Activated naive CD4-positive, alpha-beta T cell treated with anti-CD3 and anti-CD28 coated beads for 36 hours (primary cell): ENCODE measurements at regions of chr2 and their contacts with region 1.

Region 1: GRCh38 chr2:12716282-12717190 is at the start of gene TRIB2:
- DNase-seq: peak; percentile 84
- H3K4me3 Mint-ChIP-seq: peak within 1 kb of the TSS; percentile 96
- H3K27ac Mint-ChIP-seq: peak within 1 kb of the TSS; percentile 76
- H3K4me1 Mint-ChIP-seq: peaks cover 46% of the 10 kb centered on the region
- H3K27me3 Mint-ChIP-seq: peaks cover 1% of the 10 kb centered on the region
- total RNA-seq, gene TRIB2: 3.7 to 4.4 TPM

Region 2: GRCh38 chr2:11863513-11864328 is 852.8 kb before region 1 on chr2:
- CTCF ChIA-PET with region 1: interaction called, 4 read pairs
- intact Hi-C with region 1: loop called (anchors 1 kb)
- DNase-seq: peak; percentile 74
- H3K4me3 Mint-ChIP-seq: no peak overlapping the region
- H3K27ac Mint-ChIP-seq: no peak overlapping the region
- H3K4me1 Mint-ChIP-seq: peaks cover 22% of the 10 kb centered on the region
- H3K27me3 Mint-ChIP-seq: peaks cover 2% of the 10 kb centered on the region

Region 3: GRCh38 chr2:12127638-12128037 is 588.9 kb before region 1 on chr2:
- CTCF ChIA-PET with region 1: interaction called, 3 read pairs
- intact Hi-C with region 1: loop called (anchors 2 kb)
- DNase-seq: peak; percentile 37
- H3K4me3 Mint-ChIP-seq: no peak overlapping the region
- H3K27ac Mint-ChIP-seq: peak overlapping the region; percentile 74
- H3K4me1 Mint-ChIP-seq: peaks cover 2% of the 10 kb centered on the region
- H3K27me3 Mint-ChIP-seq: no peaks in the 10 kb centered on the region

Region 4: DNA sequence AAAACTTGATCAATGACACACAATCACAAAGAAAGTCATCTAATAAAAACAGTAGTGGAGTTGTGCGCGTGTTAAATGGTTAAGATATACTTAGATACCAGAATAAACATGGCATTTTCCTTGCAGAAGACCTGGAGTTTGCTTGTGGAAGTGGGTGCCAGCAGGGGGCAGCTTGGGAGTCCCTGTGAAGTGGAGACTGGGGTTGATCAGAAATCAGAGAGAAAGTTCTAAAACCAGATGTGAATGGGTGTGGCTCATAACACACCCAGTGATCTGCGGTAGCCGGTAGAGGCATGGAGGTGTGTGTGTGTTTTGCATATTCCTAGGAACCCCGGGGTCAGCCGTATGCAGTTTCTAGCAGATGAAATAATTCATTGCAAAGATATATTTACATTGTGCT is 299.9 kb before region 1 on chr2:
- CTCF ChIA-PET with region 1: interaction called, 20 read pairs
- intact Hi-C with region 1: loop called (anchors 1 kb)
- DNase-seq: peak; percentile 72
- H3K4me3 Mint-ChIP-seq: no peak overlapping the region
- H3K27ac Mint-ChIP-seq: no peak overlapping the region
- H3K4me1 Mint-ChIP-seq: peaks cover 34% of the 10 kb centered on the region
- H3K27me3 Mint-ChIP-seq: no peaks in the 10 kb centered on the region

Region 5: DNA sequence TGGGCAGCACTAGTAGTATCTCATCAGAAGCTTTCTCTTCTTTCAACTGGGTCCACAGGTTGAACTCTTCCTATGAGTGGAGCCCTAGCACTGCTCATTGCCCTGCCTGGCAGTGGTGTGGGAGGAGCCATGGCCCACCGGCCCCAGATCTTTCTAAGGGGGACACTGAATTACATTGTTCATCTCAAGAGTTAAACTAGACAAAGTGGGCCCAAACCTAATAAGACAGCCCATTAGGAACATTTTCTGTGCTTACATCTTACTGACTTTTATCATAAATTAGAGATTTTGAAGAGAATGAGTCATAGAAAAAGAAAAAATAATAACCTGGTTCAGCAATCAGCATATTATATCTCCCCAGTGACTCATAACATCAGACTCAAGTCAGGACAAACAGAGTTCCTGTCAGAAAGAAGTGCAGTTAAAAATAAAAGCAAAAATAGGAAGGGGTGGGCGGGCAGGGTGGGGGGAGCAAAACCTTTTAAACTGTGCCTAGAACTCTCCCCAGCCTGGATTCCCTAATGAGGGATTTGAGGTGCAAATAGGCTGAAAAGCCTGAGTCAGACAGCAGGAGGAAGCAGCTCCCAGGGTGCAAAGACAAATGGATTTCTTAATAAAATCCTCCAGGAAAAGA is 161.4 kb before region 1 on chr2:
- CTCF ChIA-PET with region 1: interaction called, 21 read pairs
- intact Hi-C with region 1: loop called (anchors 1 kb)
- DNase-seq: peak; percentile 52
- H3K4me3 Mint-ChIP-seq: peak overlapping the region; percentile 5
- H3K27ac Mint-ChIP-seq: peak overlapping the region; percentile 86
- H3K4me1 Mint-ChIP-seq: peaks cover 35% of the 10 kb centered on the region
- H3K27me3 Mint-ChIP-seq: no peaks in the 10 kb centered on the region

Region 6: DNA sequence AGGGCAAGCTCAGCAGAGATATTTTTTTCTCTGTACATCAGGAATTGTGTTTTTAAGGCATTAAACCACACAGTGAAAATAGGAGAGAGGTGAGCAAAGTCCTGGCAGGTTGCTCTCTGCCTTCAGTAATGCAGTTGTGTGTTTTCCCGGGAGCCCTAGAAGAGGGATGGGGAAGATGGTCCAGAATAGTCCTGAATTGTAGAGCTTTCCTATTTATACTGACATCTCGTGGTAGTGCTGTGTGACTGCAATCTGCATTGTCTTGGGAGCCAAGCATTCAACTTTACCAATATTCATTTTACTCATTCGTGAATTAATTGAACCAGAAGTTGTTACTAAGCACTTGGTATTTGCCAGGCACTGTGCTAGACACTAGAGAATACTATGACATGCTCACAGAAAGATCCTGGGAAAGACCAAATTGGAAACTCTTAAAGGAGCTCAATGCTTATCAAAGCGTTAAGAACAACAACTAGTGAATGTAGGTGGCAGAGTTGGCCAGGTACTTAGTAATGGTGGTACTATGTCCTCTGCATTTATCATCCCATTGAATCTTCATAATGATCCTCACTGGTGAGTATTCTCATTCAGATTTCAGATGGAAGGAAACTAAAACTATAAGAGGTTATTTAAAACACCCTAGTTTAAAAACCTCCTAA is 214.8 kb after region 1 on chr2:
- CTCF ChIA-PET with region 1: interaction called, 17 read pairs
- intact Hi-C with region 1: loop called (anchors 1 kb)
- DNase-seq: no peak
- H3K4me3 Mint-ChIP-seq: no peak overlapping the region
- H3K27ac Mint-ChIP-seq: no peak overlapping the region
- H3K4me1 Mint-ChIP-seq: peaks cover 8% of the 10 kb centered on the region
- H3K27me3 Mint-ChIP-seq: peaks cover 2% of the 10 kb centered on the region